ENCODE measurements at regions of chr7 and their contacts with region 1.

Region 1: GRCh38 chr7:786472-787255 is 45.6 kb upstream of the SUN1 start:
- DNase-seq: peak; percentile 51 to 77 (median 58)
- H3K4me3 ChIP-seq: no peak overlapping the region
- H3K4me3 Mint-ChIP-seq: no peak overlapping the region
- H3K27ac ChIP-seq: no peak overlapping the region
- H3K27ac Mint-ChIP-seq: no peak overlapping the region
- H3K4me1 ChIP-seq: peaks cover 4% of the 10 kb centered on the region
- H3K4me1 Mint-ChIP-seq: peaks cover 0 to 3% (median 0%) of the 10 kb centered on the region in 3 donors
- H3K27me3 ChIP-seq: no peaks in the 10 kb centered on the region
- H3K27me3 Mint-ChIP-seq: no peaks in the 10 kb centered on the region

Region 2: GRCh38 chr7:873367-874002 is 86.8 kb after region 1 on chr7:
- CTCF ChIA-PET with region 1: interaction called, 22 read pairs
- POLR2A ChIA-PET with region 1: no interaction called
- DNase-seq: peak; percentile 49 to 73 (median 64)
- H3K4me3 ChIP-seq: no peak overlapping the region
- H3K4me3 Mint-ChIP-seq: peak overlapping the region in 2 of 7 donors; percentile 62 to 78
- H3K27ac ChIP-seq: no peak overlapping the region
- H3K27ac Mint-ChIP-seq: peak overlapping the region in 6 of 8 donors; percentile 7 to 93 (median 52)
- H3K4me1 ChIP-seq: peaks cover 24% of the 10 kb centered on the region
- H3K4me1 Mint-ChIP-seq: peaks cover 14 to 16% (median 16%) of the 10 kb centered on the region in 3 donors
- H3K27me3 ChIP-seq: no peaks in the 10 kb centered on the region
- H3K27me3 Mint-ChIP-seq: no peaks in the 10 kb centered on the region